Calu3 (cell line): ENCODE measurements at regions of chr7 and their contacts with region 1.

Region 1: DNA sequence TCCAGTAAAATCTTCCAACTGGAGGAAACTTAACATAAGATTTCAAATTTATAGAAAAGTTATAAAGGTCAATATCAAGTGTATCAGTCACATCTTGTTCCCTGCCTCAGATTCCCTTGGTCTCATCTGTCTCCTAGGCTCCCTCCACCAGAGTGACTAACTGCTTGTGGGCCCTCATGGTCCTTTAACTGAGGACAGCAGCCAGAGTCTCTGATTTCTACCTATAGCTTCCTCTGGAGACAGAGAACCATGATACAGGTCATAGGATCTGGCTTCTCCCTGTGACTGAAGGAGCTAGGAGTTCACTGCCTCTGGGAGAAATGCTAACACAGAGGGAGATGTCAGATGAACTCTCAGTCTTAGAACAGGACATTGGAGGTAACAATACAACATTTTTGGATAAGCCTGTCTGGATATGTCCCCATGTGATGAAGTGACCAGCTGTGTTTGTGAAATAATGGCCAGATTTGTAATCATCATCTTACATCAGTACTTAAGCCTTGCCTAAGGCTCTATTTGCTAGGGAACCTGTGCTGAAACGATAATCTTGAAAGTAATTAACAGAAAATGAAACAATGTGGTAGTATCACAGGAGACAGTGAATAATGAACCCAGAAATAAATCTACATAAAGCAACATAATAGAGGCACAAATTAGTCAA is 56.3 kb downstream of the CRPPA start:
- DNase-seq: no peak
- H3K4me3 Mint-ChIP-seq: no peak overlapping the region
- H3K27ac Mint-ChIP-seq: peak overlapping the region; percentile 72
- H3K4me1 Mint-ChIP-seq: peaks cover 62% of the 10 kb centered on the region
- H3K27me3 Mint-ChIP-seq: no peaks in the 10 kb centered on the region
- CTCF ChIP-seq: no peak

Region 2: DNA sequence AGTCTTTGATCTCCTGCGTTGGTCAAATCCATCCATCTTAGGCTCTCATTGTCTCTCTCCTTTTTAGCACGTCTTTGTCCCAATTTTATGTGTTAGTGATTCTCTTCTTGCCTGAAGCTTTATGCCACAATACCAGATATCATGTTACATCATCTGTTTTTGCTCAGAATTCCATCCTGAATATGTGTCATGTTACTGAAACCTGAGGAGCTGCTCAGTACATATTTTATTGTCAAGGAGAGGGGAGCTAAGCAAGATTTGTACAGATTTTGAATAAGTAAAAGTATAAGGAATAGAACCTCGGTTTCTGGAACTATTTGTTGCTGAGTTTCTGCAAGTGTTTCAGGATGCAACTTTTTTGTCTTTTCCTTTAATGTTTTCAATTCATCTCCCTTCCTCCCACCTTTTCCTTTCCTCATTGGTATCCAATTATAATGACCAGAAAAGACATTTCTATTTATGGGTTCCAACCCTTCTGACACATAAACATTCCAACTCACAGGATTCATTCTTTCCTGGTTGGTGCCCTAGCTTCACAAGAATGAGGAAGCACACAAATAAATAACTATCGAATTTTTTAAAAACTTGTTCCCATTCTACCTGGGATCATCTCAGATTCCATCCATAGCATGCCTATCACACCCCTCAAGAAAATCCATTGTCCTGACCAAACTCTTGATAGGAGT is 235.5 kb before region 1 on chr7:
- CTCF ChIA-PET with region 1: no interaction called
- intact Hi-C with region 1: loop called (anchors 5 kb)
- DNase-seq: peak; percentile 30
- H3K4me3 Mint-ChIP-seq: peak overlapping the region; percentile 3
- H3K27ac Mint-ChIP-seq: peak overlapping the region; percentile 92
- H3K4me1 Mint-ChIP-seq: peaks cover 35% of the 10 kb centered on the region
- H3K27me3 Mint-ChIP-seq: no peaks in the 10 kb centered on the region
- CTCF ChIP-seq: no peak

Region 3: GRCh38 chr7:16318989-16319915 is 45.8 kb before region 1 on chr7:
- CTCF ChIA-PET with region 1: no interaction called
- intact Hi-C with region 1: loop called (anchors 1 kb)
- DNase-seq: peak; percentile 25
- H3K4me3 Mint-ChIP-seq: peak overlapping the region; percentile 11
- H3K27ac Mint-ChIP-seq: peak overlapping the region; percentile 86
- H3K4me1 Mint-ChIP-seq: peaks cover 57% of the 10 kb centered on the region
- H3K27me3 Mint-ChIP-seq: no peaks in the 10 kb centered on the region
- CTCF ChIP-seq: no peak

Region 4: GRCh38 chr7:16409777-16410176 is 44.7 kb after region 1 on chr7:
- CTCF ChIA-PET with region 1: no interaction called
- intact Hi-C with region 1: loop called (anchors 1 kb)
- DNase-seq: no peak
- H3K4me3 Mint-ChIP-seq: no peak overlapping the region
- H3K27ac Mint-ChIP-seq: no peak overlapping the region
- H3K4me1 Mint-ChIP-seq: peaks cover 42% of the 10 kb centered on the region
- H3K27me3 Mint-ChIP-seq: no peaks in the 10 kb centered on the region
- CTCF ChIP-seq: no peak

Region 5: GRCh38 chr7:16420649-16421332 is 55.7 kb after region 1 on chr7:
- CTCF ChIA-PET with region 1: interaction called, 8 read pairs
- intact Hi-C with region 1: loop called (anchors 2 kb)
- DNase-seq: peak; percentile 93
- H3K4me3 Mint-ChIP-seq: peak overlapping the region; percentile 74
- H3K27ac Mint-ChIP-seq: peak overlapping the region; percentile 86
- H3K4me1 Mint-ChIP-seq: peaks cover 53% of the 10 kb centered on the region
- H3K27me3 Mint-ChIP-seq: no peaks in the 10 kb centered on the region
- CTCF ChIP-seq: peak; percentile 67

Region 6: GRCh38 chr7:17009007-17009719 is 644.1 kb after region 1 on chr7:
- CTCF ChIA-PET with region 1: no interaction called
- intact Hi-C with region 1: no loop called
- DNase-seq: no peak
- H3K4me3 Mint-ChIP-seq: no peak overlapping the region
- H3K27ac Mint-ChIP-seq: peak overlapping the region; percentile 58
- H3K4me1 Mint-ChIP-seq: peaks cover 87% of the 10 kb centered on the region
- H3K27me3 Mint-ChIP-seq: no peaks in the 10 kb centered on the region
- CTCF ChIP-seq: peak; percentile 67